Heart right ventricle (tissue), 16 donors: ENCODE measurements at regions of chr7 and their contacts with region 1.

Region 1: DNA sequence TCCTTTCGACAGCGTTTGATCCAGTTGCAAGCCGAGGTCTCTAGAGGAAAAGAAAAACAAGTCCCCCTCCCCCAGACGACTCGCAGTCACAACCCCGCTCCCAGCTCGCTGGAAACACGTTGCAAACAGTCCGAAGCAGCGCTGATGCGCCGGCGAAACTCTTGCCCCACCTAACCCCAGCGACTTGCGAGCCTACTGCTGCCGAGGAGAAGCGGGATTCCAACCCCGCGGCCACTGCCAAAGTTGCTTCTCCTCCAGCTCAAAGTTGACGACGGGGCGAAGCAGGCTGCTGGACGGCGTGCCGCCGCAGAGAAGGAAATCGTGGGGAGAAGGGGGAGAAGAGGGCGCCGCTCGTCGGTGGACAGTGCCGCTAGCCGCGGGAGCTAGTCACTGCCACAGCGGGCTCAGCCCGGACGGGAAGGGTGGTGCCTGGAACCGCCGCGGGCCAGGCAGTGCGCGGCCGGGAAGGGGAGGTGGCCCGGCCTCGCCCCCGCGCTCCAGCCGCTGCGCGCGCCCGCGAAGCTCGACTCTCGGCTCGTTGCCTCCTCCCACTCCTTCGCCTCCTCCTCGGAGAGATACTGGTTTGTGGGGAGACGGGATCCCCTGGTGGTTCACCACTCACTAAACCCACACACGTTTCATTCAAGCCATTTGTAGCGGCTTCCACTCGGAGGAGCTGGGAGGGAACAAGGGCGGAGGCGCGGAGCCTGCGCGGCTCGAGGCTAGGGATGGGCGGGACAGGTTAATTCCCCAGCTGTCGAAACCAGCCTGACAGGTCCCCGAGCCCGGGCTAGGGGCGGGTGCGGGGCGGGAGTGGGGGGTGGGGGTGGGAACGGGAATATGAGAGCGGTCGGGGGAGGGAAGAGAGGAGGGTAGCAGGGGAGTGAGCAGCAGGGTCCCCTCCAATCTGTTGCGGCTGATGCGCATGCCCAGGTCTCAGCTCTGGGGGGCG is at the start of gene GPR37:
- DNase-seq: peak in 1 of 2 donors; percentile 26
- ATAC-seq: peak; percentile 52 to 87 (median 72)
- H3K4me3 ChIP-seq: peak within 1 kb of the TSS; percentile 14 to 57 (median 46)
- H3K27ac ChIP-seq: no peak within 1 kb of the TSS
- H3K4me1 ChIP-seq: peaks cover 0 to 21% (median 15%) of the 10 kb centered on the region in 9 donors
- H3K27me3 ChIP-seq: peaks cover 14 to 70% (median 56%) of the 10 kb centered on the region in 7 donors
- CTCF ChIP-seq: no peak
- total RNA-seq, gene GPR37: 0.09 to 0.15 TPM in 2 of 10 donors, not detected in the others

Region 2: DNA sequence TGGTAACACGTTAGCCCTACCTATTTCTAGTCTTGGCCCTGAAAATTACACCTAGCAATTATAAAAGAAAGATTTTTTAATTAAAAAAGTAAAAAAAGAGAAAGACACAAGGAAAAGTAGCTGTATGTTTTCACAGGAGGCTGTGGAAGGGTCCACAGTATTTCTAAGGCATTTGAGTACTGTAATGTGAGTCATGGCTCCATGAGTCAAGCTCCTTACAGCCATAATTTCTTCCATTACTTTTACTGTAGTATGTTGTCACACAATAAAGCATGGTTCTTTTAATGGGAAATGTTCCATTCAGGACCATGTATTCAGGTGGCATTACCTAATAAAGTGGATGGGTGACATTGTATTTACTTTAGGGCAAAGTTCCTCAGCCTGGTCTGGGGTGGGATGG is 113.4 kb before region 1 on chr7:
- intact Hi-C with region 1: no loop called
- DNase-seq: no peak
- ATAC-seq: no peak
- H3K4me3 ChIP-seq: no peak overlapping the region
- H3K27ac ChIP-seq: no peak overlapping the region
- H3K4me1 ChIP-seq: no peaks in the 10 kb centered on the region
- H3K27me3 ChIP-seq: no peaks in the 10 kb centered on the region
- CTCF ChIP-seq: no peak

Region 3: GRCh38 chr7:126667742-126668366 is 1902.2 kb after region 1 on chr7:
- intact Hi-C with region 1: loop called in 1 of 10 experiments (anchors 10 kb)
- DNase-seq: no peak
- ATAC-seq: no peak
- H3K4me3 ChIP-seq: no peak overlapping the region
- H3K27ac ChIP-seq: no peak overlapping the region
- H3K4me1 ChIP-seq: no peaks in the 10 kb centered on the region
- H3K27me3 ChIP-seq: no peaks in the 10 kb centered on the region
- CTCF ChIP-seq: no peak